Activated naive CD8-positive, alpha-beta T cell treated with anti-CD3 and anti-CD28 coated beads, Interleukin-2, amount 10 ng/mL, durations not matched to agents 7 days and 5 days (primary cell): ENCODE measurements at regions of chr16 and their contacts with region 1.

Region 1: GRCh38 chr16:4506450-4506849 is 30.3 kb downstream of the HMOX2 start:
- DNase-seq: peak; percentile 49
- ATAC-seq: peak; percentile 48
- H3K4me3 Mint-ChIP-seq: peak overlapping the region; percentile 67
- H3K27ac Mint-ChIP-seq: peak overlapping the region; percentile 91
- H3K4me1 Mint-ChIP-seq: peaks cover 47% of the 10 kb centered on the region
- H3K27me3 Mint-ChIP-seq: no peaks in the 10 kb centered on the region

Region 2: DNA sequence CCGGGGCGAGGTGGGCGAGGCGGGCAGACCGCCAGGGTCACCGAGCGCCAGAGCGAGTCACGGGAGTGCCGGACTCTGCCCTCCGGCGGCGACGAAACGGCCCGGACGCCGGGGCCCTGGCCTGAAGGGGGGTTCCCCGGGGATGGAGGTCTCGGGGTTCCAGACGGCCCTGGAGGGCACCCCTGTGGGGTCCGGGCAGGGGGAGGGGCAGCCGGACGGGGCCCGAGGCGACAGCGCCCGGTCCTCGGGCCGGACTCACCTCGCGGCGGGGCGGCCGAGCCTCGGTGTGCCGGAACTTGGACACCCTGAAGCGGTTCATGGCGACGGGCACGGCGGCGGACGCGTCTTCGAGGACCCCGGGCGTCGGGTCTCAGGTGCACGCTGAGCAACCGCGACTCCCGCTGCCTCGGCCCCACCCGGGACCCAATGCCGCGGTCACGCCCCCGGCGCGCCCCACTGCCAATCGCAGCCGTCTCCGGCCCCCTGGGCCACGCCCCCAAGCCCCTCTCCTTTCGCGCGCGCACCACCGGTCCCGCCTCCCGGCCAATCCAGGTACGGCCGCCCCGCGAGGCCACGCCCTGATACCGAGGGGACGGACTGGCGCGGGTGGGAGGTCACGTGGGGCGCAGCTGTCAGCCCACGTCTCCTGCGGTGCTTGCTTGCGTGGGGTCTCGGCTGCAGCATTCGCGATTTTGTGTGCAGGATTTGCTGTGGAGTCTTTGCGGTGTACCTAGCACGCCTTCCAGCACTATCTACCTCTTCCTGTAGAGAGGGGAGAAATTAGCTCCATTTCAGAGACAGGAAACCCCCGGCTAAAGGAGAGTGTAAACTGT is 90.0 kb before region 1 on chr16 and contains the start of gene CORO7:
- POLR2A ChIA-PET with region 1: interaction called, 22 read pairs
- DNase-seq: peak; percentile 99
- ATAC-seq: peak; percentile 69
- H3K4me3 Mint-ChIP-seq: peak within 1 kb of the TSS; percentile 92
- H3K27ac Mint-ChIP-seq: peak within 1 kb of the TSS; percentile 96
- H3K4me1 Mint-ChIP-seq: peaks cover 22% of the 10 kb centered on the region
- H3K27me3 Mint-ChIP-seq: no peaks in the 10 kb centered on the region
- total RNA-seq, gene CORO7: 168 to 186 TPM

Region 3: GRCh38 chr16:4481526-4481925 is 24.9 kb before region 1 on chr16:
- POLR2A ChIA-PET with region 1: interaction called, 105 read pairs
- DNase-seq: no peak
- ATAC-seq: no peak
- H3K4me3 Mint-ChIP-seq: peak overlapping the region; percentile 36
- H3K27ac Mint-ChIP-seq: peak overlapping the region; percentile 82
- H3K4me1 Mint-ChIP-seq: peaks cover 43% of the 10 kb centered on the region
- H3K27me3 Mint-ChIP-seq: no peaks in the 10 kb centered on the region

Region 4: GRCh38 chr16:4487955-4488498 is 18.4 kb before region 1 on chr16:
- POLR2A ChIA-PET with region 1: interaction called, 66 read pairs
- DNase-seq: no peak
- ATAC-seq: peak; percentile 52
- H3K4me3 Mint-ChIP-seq: peak overlapping the region; percentile 84
- H3K27ac Mint-ChIP-seq: peak overlapping the region; percentile 97
- H3K4me1 Mint-ChIP-seq: peaks cover 41% of the 10 kb centered on the region
- H3K27me3 Mint-ChIP-seq: no peaks in the 10 kb centered on the region

Region 5: DNA sequence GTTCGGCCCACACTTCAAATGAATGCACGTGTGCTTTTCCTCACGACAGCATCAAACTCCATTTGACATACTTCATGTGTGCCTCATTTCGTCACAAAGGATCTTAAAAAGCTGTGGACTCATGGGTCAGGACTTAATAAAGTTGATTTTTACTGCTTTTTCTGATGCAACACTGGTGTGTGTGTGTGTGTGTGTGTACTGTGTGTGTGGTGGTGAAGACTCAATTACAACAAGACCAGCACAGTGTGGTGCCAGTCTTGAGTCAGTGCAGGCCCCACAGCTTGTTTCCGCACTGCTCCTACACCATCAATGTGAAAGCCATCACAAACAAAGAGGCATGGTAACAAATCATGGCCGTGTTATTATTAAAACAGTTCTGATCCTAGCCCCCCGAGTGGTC is 14.5 kb after region 1 on chr16:
- POLR2A ChIA-PET with region 1: no interaction called
- DNase-seq: no peak
- ATAC-seq: no peak
- H3K4me3 Mint-ChIP-seq: no peak overlapping the region
- H3K27ac Mint-ChIP-seq: no peak overlapping the region
- H3K4me1 Mint-ChIP-seq: peaks cover 21% of the 10 kb centered on the region
- H3K27me3 Mint-ChIP-seq: no peaks in the 10 kb centered on the region

Region 6: GRCh38 chr16:4550591-4550990 is 44.1 kb after region 1 on chr16:
- POLR2A ChIA-PET with region 1: interaction called, 45 read pairs
- DNase-seq: no peak
- ATAC-seq: no peak
- H3K4me3 Mint-ChIP-seq: no peak overlapping the region
- H3K27ac Mint-ChIP-seq: no peak overlapping the region
- H3K4me1 Mint-ChIP-seq: peaks cover 6% of the 10 kb centered on the region
- H3K27me3 Mint-ChIP-seq: peaks cover 9% of the 10 kb centered on the region

Region 7: GRCh38 chr16:4624015-4624826 is 117.8 kb after region 1 on chr16 and contains the start of gene MGRN1:
- POLR2A ChIA-PET with region 1: interaction called, 12 read pairs
- DNase-seq: peak; percentile 94
- ATAC-seq: peak; percentile 85
- H3K4me3 Mint-ChIP-seq: peak within 1 kb of the TSS; percentile 96
- H3K27ac Mint-ChIP-seq: peak within 1 kb of the TSS; percentile 99
- H3K4me1 Mint-ChIP-seq: peaks cover 30% of the 10 kb centered on the region
- H3K27me3 Mint-ChIP-seq: no peaks in the 10 kb centered on the region
- total RNA-seq, gene MGRN1: 84.4 to 91.7 TPM